ENCODE measurements at regions of chr2 and their contacts with region 1.

Region 1: GRCh38 chr2:29923110-29923721 is 1.8 kb upstream of the ALK start:
- DNase-seq: peak; percentile 66
- H3K27ac ChIP-seq: no peak overlapping the region
- CTCF ChIP-seq: peak; percentile 94

Region 2: GRCh38 chr2:29844713-29845326 is 78.4 kb before region 1 on chr2:
- CTCF ChIA-PET with region 1: no interaction called
- POLR2A ChIA-PET with region 1: no interaction called
- DNase-seq: no peak
- H3K27ac ChIP-seq: no peak overlapping the region
- CTCF ChIP-seq: no peak

Region 3: GRCh38 chr2:30026087-30027055 is 103.2 kb after region 1 on chr2:
- CTCF ChIA-PET with region 1: interaction called, 20 read pairs
- POLR2A ChIA-PET with region 1: no interaction called
- DNase-seq: peak; percentile 73
- H3K27ac ChIP-seq: no peak overlapping the region
- CTCF ChIP-seq: peak; percentile 48

Region 4: DNA sequence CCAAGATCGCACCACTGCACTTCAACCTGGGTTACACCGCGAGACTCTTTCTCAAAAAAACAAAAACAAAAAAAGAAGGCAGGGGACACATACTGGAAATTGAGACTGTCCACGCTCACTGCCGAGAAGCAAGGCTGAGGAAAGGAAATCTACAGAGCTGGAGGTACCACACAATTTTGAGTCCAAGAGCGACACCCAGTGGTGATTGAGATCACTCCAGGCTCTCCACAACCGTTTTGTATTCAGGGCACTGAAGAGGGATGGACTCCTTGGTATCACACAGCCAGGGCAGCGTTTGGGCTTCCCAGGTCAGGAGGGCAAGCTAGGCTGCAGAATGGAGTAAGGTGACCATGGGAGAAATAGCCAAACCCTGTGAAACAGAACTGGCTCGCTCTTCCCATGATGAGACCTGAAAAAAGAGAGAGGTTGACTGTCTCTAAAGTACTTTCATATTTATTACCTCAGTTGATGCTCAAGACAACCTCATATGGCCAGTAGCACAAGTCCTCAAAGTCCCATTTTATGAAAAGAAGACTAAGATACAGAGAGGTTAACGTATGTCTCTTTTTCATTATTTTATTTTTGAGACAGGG is 149.1 kb after region 1 on chr2:
- CTCF ChIA-PET with region 1: interaction called, 23 read pairs
- POLR2A ChIA-PET with region 1: no interaction called
- DNase-seq: peak; percentile 70
- H3K27ac ChIP-seq: no peak overlapping the region
- CTCF ChIP-seq: peak; percentile 63

Measured in RWPE1 (cell line).